Caco-2 (cell line): ENCODE measurements at regions of chr3 and their contacts with region 1.

Region 1: GRCh38 chr3:51311055-51311454 is 74.0 kb upstream of the MANF start:
- DNase-seq: peak in 1 of 2 experiments; percentile 33
- H3K4me3 ChIP-seq: no peak overlapping the region
- H3K4me3 Mint-ChIP-seq: no peak overlapping the region
- H3K27ac Mint-ChIP-seq: no peak overlapping the region
- H3K4me1 ChIP-seq: no peaks in the 10 kb centered on the region
- H3K4me1 Mint-ChIP-seq: no peaks in the 10 kb centered on the region
- H3K27me3 ChIP-seq: no peaks in the 10 kb centered on the region; the same call in 1 of the 2 replicates
- H3K27me3 Mint-ChIP-seq: peaks cover 3% of the 10 kb centered on the region
- CTCF ChIP-seq: peak; percentile 43 to 63

Region 2: DNA sequence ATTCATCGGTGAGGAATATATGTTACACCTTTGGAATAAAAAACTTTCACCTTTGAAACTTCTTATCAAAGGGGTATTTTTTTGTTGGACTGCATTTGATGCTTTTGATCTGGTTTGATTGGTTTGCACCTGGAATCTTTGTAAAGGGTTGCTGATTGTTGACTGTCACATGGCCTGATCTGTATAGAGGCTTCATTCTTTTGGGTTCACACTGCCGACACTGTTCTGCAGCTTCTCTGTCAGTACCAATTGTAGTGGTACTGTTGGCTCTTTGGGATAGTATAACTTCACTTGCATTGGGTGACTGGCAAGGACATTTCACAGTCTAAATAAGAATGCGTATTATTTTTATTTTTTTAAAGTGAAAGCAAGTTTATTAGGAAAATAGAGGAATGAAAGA is 480.6 kb before region 1 on chr3:
- CTCF ChIA-PET with region 1: no interaction called
- POLR2A ChIA-PET with region 1: no interaction called
- intact Hi-C with region 1: no loop called
- DNase-seq: no peak
- H3K4me3 ChIP-seq: no peak overlapping the region
- H3K4me3 Mint-ChIP-seq: no peak overlapping the region
- H3K27ac Mint-ChIP-seq: no peak overlapping the region
- H3K4me1 ChIP-seq: no peaks in the 10 kb centered on the region
- H3K4me1 Mint-ChIP-seq: no peaks in the 10 kb centered on the region
- H3K27me3 ChIP-seq: no peaks in the 10 kb centered on the region
- H3K27me3 Mint-ChIP-seq: peaks cover 6% of the 10 kb centered on the region
- CTCF ChIP-seq: no peak

Region 3: GRCh38 chr3:50971487-50971924 is 339.5 kb before region 1 on chr3:
- CTCF ChIA-PET with region 1: interaction called, 12 read pairs
- POLR2A ChIA-PET with region 1: no interaction called
- intact Hi-C with region 1: loop called (anchors 2 kb)
- DNase-seq: peak; percentile 60 to 63
- H3K4me3 ChIP-seq: no peak overlapping the region
- H3K4me3 Mint-ChIP-seq: no peak overlapping the region
- H3K27ac Mint-ChIP-seq: no peak overlapping the region
- H3K4me1 ChIP-seq: no peaks in the 10 kb centered on the region
- H3K4me1 Mint-ChIP-seq: no peaks in the 10 kb centered on the region
- H3K27me3 ChIP-seq: no peaks in the 10 kb centered on the region
- H3K27me3 Mint-ChIP-seq: no peaks in the 10 kb centered on the region
- CTCF ChIP-seq: peak; percentile 69 to 83

Region 4: DNA sequence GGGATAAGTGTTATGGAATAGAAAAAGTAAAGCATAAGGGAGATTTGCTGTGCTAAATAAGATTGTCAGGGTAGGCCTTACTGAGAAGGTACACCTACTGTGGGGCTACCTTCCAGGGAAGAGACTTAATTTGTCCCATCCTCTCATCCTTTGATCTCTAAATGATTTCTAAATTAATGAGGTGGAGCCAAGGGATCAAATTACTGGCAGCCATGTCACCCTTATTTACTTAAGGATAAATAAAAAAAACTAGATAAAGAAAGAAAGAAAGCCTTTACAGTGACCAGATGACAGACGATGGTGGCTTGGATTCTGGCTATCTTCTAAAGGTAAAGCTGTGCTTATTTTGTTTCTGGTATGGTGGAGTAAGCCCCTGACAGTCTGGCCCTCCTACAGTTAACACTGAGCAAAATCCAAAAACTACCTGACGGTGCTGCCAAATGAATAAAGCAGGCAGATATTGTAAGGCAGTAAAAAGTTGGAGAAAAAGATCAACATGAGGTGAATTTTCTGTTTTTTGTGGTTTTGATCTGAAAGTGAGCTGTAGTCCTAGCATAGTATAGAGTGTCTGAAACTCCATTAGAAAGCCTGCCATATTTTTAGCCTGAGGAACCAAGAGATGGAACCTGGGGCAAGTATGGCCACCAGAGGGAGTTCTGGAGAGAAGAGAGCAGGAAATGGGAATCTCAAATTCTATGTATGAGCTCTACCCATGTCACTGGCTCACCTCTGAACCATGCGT is 211.1 kb before region 1 on chr3:
- CTCF ChIA-PET with region 1: interaction called, 13 read pairs
- POLR2A ChIA-PET with region 1: no interaction called
- intact Hi-C with region 1: no loop called
- DNase-seq: peak; percentile 51 to 69
- H3K4me3 ChIP-seq: no peak overlapping the region
- H3K4me3 Mint-ChIP-seq: no peak overlapping the region
- H3K27ac Mint-ChIP-seq: no peak overlapping the region
- H3K4me1 ChIP-seq: no peaks in the 10 kb centered on the region
- H3K4me1 Mint-ChIP-seq: peaks cover 9% of the 10 kb centered on the region
- H3K27me3 ChIP-seq: no peaks in the 10 kb centered on the region
- H3K27me3 Mint-ChIP-seq: peaks cover 8% of the 10 kb centered on the region
- CTCF ChIP-seq: peak; percentile 65 to 90